ENCODE measurements at regions of chr10 and their contacts with region 1.

Region 1: DNA sequence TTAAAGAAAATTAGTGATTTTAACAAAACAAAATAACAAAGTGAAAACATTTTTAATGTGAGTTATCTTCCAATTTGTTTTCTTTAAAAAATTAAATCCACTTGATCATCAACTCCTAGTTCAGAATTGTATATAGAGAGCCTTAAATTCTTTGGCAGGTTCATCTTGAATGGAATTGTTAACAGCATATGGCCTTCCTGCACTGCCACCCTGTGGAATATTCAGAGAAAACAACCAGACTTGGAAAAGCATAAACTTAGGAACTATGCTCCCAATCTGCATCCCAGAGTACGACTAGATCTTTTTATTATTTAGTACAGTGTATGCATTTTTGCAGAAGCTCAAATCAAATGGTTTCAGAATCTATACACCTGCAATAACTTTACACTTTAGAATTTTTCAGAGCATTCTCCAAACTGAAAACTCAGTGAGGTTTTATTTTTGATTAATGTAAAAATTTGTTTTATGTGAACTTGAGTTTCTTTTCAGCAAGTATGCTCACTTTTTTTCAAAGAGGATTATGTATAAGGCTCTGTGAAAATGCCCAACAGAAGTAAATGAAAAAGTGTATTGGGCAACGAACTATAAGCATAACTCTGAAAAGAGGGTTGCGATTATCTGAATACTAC is 44.9 kb upstream of the ANK3 start:
- DNase-seq: no peak
- H3K4me3 Mint-ChIP-seq: no peak overlapping the region
- H3K27ac Mint-ChIP-seq: no peak overlapping the region
- H3K4me1 Mint-ChIP-seq: no peaks in the 10 kb centered on the region
- H3K27me3 Mint-ChIP-seq: no peaks in the 10 kb centered on the region

Region 2: GRCh38 chr10:60099998-60100747 is 334.4 kb before region 1 on chr10:
- intact Hi-C with region 1: loop called (anchors 1 kb)
- DNase-seq: no peak
- H3K4me3 Mint-ChIP-seq: no peak overlapping the region
- H3K27ac Mint-ChIP-seq: no peak overlapping the region
- H3K4me1 Mint-ChIP-seq: no peaks in the 10 kb centered on the region
- H3K27me3 Mint-ChIP-seq: no peaks in the 10 kb centered on the region

Region 3: GRCh38 chr10:60114765-60115586 is 319.6 kb before region 1 on chr10:
- intact Hi-C with region 1: loop called (anchors 1 kb)
- DNase-seq: no peak
- H3K4me3 Mint-ChIP-seq: no peak overlapping the region
- H3K27ac Mint-ChIP-seq: no peak overlapping the region
- H3K4me1 Mint-ChIP-seq: no peaks in the 10 kb centered on the region
- H3K27me3 Mint-ChIP-seq: no peaks in the 10 kb centered on the region

Region 4: GRCh38 chr10:60237977-60238758 is 196.4 kb before region 1 on chr10:
- intact Hi-C with region 1: loop called (anchors 2 kb)
- DNase-seq: no peak
- H3K4me3 Mint-ChIP-seq: peak overlapping the region; percentile 27
- H3K27ac Mint-ChIP-seq: peak overlapping the region; percentile 33
- H3K4me1 Mint-ChIP-seq: peaks cover 30% of the 10 kb centered on the region
- H3K27me3 Mint-ChIP-seq: no peaks in the 10 kb centered on the region

Region 5: DNA sequence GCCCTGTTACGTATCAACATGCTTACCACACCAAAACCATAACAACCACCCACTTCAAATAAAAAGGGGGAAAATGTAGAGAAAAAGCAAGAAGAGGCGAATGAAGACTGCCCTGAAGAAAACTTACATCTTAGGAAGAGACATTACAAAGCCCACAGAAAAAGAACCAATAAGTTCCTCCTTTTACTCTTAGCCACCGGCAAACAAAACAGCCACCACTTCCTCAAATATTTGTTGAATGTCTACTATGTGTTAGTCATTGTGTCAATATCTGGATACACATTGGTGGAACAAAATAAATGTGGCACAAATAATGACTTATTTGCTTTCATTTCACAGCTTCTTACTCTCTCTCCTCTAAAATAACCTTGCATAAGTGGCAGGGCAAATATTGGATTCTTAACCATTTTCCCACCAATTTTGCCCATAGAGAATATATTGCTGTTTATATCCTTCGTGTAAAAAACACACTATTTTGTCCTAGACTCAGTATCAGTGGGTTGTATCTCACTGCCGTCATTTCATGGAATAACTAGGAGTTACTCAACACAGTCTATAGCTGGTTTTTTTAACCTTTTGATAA is 151.7 kb before region 1 on chr10:
- intact Hi-C with region 1: no loop called
- DNase-seq: no peak
- H3K4me3 Mint-ChIP-seq: no peak overlapping the region
- H3K27ac Mint-ChIP-seq: no peak overlapping the region
- H3K4me1 Mint-ChIP-seq: peaks cover 6% of the 10 kb centered on the region
- H3K27me3 Mint-ChIP-seq: no peaks in the 10 kb centered on the region

Measured in activated T-helper 1 cell treated with anti-CD3 and anti-CD28 coated beads, Interleukin-12 subunit alpha, Interleukin-12 subunit beta, Interleukin-2, Interleukin-4 antibody, amounts not matched to agents 30 ng/mL and 10 ng/mL and 1 ng/mL, durations not matched to agents 14 hours and 24 hours and 36 hours (primary cell).